ENCODE measurements at regions of chr2 and their contacts with region 1.

Region 1: DNA sequence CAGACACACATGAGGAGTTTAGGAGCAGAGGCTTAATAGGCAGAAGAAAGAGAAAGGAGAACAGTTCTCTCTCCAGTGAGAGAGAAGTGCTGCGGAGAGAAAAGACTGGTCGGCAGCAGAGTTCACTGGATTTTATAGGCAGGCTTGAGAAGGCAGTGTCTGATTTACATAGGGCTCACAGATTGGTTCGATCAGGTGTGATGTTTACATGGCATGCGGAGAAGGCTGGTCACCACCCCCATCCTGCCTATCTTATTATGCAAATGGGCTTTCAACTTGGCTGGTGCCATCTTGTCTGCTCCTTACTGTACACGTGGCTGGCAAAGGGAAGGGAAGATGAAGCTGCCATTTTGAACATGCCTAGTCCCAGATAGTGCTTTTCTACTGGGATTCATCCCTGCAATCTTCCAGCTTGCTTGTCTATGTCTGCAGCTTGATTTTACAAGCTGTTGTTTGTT is 113.4 kb downstream of the AP1S3 start:
- DNase-seq: peak in 3 of 4 experiments; percentile 7 to 90 (median 65)
- ATAC-seq: peak; percentile 93
- H3K4me3 ChIP-seq: peak overlapping the region; percentile 46
- H3K27ac ChIP-seq: peak overlapping the region; percentile 80
- H3K4me1 ChIP-seq: peaks cover 0 to 20% of the 10 kb centered on the region in 2 experiments; a peak in 2 of 5 replicates
- H3K27me3 ChIP-seq: no peaks in the 10 kb centered on the region
- CTCF ChIP-seq: no peak
- EP300 ChIP-seq: no peak
- POLR2A ChIP-seq: peak; percentile 98
- RAD21 ChIP-seq: no peak

Region 2: DNA sequence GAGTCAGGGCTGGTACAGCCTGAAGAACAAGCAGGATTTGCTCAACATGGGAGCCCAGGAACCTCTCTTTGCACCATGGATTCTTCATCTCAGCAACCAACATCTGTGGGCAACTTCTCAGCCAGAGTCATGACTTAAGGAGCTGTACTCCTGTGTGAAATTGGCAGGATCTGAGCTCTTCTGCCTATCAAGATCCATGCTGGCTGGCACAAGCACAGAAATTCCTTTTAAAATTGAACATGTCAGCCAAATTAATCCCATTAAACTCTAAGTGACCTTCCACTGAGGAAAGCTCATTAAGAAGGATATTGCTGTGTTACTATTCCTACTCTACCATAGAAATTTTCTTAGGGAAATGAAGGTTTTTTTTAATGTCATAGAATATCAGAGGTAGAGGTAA is 11.3 kb before region 1 on chr2:
- CTCF ChIA-PET with region 1: no interaction called
- POLR2A ChIA-PET with region 1: interaction called, 16 read pairs
- in situ Hi-C with region 1: no loop called
- intact Hi-C with region 1: no loop called
- DNase-seq: no peak
- ATAC-seq: no peak
- H3K4me3 ChIP-seq: no peak overlapping the region
- H3K27ac ChIP-seq: no peak overlapping the region
- H3K4me1 ChIP-seq: no peaks in the 10 kb centered on the region
- H3K27me3 ChIP-seq: no peaks in the 10 kb centered on the region
- CTCF ChIP-seq: no peak
- EP300 ChIP-seq: no peak
- POLR2A ChIP-seq: no peak
- RAD21 ChIP-seq: no peak

Region 3: DNA sequence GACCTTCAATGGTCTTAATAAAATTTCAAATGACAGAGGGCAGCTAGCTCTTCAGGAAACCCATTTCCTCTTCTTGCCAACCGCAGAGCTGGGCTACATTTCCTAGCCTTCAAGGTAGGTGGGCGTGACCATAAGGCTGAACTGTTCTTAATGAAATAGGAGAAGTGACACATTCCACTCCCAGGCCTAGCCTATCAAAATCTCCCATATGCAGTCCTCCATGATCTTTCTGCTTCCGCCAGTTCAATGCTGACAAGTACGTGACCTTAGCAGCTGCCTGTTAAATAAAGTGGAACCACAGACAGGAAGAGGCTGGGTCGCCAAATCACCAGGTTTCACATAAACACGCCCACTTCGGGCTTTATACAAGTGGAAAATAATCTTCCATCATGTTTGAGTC is 301.9 kb after region 1 on chr2:
- CTCF ChIA-PET with region 1: no interaction called
- POLR2A ChIA-PET with region 1: no interaction called
- in situ Hi-C with region 1: no loop called
- intact Hi-C with region 1: no loop called
- DNase-seq: peak in 3 of 4 experiments; percentile 11 to 29 (median 13)
- ATAC-seq: peak; percentile 87
- H3K4me3 ChIP-seq: no peak overlapping the region
- H3K27ac ChIP-seq: no peak overlapping the region
- H3K4me1 ChIP-seq: peaks cover 0 to 3% of the 10 kb centered on the region in 2 experiments; a peak in 1 of 5 replicates
- H3K27me3 ChIP-seq: no peaks in the 10 kb centered on the region; a peak in 2 of 5 replicates
- CTCF ChIP-seq: no peak
- EP300 ChIP-seq: no peak
- POLR2A ChIP-seq: no peak
- RAD21 ChIP-seq: no peak

Region 4: GRCh38 chr2:224039941-224040440 is 316.0 kb after region 1 on chr2:
- CTCF ChIA-PET with region 1: no interaction called
- POLR2A ChIA-PET with region 1: no interaction called
- in situ Hi-C with region 1: no loop called
- intact Hi-C with region 1: no loop called
- DNase-seq: no peak
- ATAC-seq: no peak; the same call in 2 of the 3 replicates
- H3K4me3 ChIP-seq: no peak overlapping the region
- H3K27ac ChIP-seq: no peak overlapping the region
- H3K4me1 ChIP-seq: peaks cover 0 to 8% of the 10 kb centered on the region in 2 experiments; a peak in 1 of 5 replicates
- H3K27me3 ChIP-seq: peaks cover 7 to 31% of the 10 kb centered on the region in 2 experiments; a peak in 3 of 5 replicates
- CTCF ChIP-seq: no peak
- EP300 ChIP-seq: no peak
- POLR2A ChIP-seq: no peak
- RAD21 ChIP-seq: no peak

Measured in K562 (cell line).